ENCODE measurements at regions of chr17 and their contacts with region 1.

Region 1: GRCh38 chr17:42322382-42323267 is 34.3 kb downstream of the STAT5A start:
- DNase-seq: peak; percentile 95
- H3K4me3 ChIP-seq: no peak overlapping the region
- H3K27ac ChIP-seq: peak overlapping the region in 1 of 2 donors; percentile 64
- H3K4me1 ChIP-seq: no peaks in the 10 kb centered on the region
- H3K27me3 ChIP-seq: no peaks in the 10 kb centered on the region
- CTCF ChIP-seq: peak; percentile 98 to 100 (median 100)
- POLR2A ChIP-seq: no peak

Region 2: GRCh38 chr17:42405963-42406495 is 83.4 kb after region 1 on chr17:
- intact Hi-C with region 1: loop called (anchors 2 kb)
- DNase-seq: peak; percentile 74
- H3K4me3 ChIP-seq: no peak overlapping the region
- H3K27ac ChIP-seq: peak overlapping the region; percentile 76 to 77
- H3K4me1 ChIP-seq: peaks cover 18% of the 10 kb centered on the region
- H3K27me3 ChIP-seq: no peaks in the 10 kb centered on the region
- CTCF ChIP-seq: peak; percentile 75 to 94 (median 85)
- POLR2A ChIP-seq: no peak

Region 3: DNA sequence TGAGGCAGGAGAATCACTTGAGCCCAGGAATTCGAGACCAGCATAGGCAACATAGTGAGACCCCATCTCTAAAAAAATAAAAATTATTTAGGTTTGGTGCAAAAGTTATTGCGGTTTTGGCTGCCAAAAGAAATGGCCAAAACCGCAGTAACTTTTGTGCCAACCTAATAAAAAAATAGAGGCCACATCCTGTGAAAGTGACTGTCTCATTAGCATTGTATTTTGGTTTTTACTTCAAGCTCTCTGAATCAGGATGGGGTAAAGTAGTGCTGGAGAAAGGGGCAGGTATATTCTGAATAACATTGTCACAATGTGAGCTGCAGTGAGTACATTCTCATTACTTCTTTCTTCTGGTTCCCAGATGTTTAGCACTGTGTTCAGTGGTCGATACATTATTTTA is 172.0 kb after region 1 on chr17:
- intact Hi-C with region 1: no loop called
- DNase-seq: no peak
- H3K4me3 ChIP-seq: no peak overlapping the region
- H3K27ac ChIP-seq: no peak overlapping the region
- H3K4me1 ChIP-seq: no peaks in the 10 kb centered on the region
- H3K27me3 ChIP-seq: no peaks in the 10 kb centered on the region
- CTCF ChIP-seq: no peak
- POLR2A ChIP-seq: no peak

Region 4: DNA sequence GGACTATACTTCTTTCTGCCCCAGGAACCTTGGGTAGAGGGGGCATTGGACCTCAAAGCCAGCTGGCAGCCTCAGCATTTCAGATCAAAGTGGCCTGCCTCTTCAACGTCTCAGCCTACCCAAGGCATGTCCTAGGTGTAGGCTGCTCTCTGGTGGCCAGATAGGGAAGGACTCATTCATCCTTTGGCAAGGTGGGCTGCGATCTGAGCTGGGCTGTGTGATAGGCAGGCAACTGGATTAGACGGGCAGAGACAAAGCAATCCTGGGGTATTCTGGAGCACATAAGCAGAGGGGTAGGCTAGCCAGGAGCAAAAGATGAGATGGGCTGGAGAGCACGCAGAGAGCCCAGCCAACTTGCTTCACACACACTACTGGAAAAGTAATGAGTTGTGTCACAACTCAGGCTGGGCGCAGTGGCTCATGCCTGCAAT is 204.7 kb after region 1 on chr17:
- intact Hi-C with region 1: loop called (anchors 2 kb)
- DNase-seq: peak; percentile 67
- H3K4me3 ChIP-seq: no peak overlapping the region
- H3K27ac ChIP-seq: no peak overlapping the region
- H3K4me1 ChIP-seq: peaks cover 4% of the 10 kb centered on the region
- H3K27me3 ChIP-seq: no peaks in the 10 kb centered on the region
- CTCF ChIP-seq: peak; percentile 59 to 90 (median 78)
- POLR2A ChIP-seq: no peak